Naive thymus-derived CD4-positive, alpha-beta T cell (primary cell): ENCODE measurements at regions of chr1 and their contacts with region 1.

Region 1: GRCh38 chr1:59699227-59699847 is 115.4 kb upstream of the HOOK1 start:
- DNase-seq: peak in 7 of 9 donors; percentile 21 to 63 (median 51)
- ATAC-seq: peak; percentile 75
- H3K4me3 ChIP-seq: no peak overlapping the region
- H3K4me3 Mint-ChIP-seq: peak overlapping the region in 1 of 10 donors; percentile 19
- H3K27ac ChIP-seq: no peak overlapping the region
- H3K27ac Mint-ChIP-seq: peak overlapping the region in 2 of 9 donors; percentile 1 to 31
- H3K4me1 ChIP-seq: peaks cover 5 to 6% of the 10 kb centered on the region in 2 donors
- H3K4me1 Mint-ChIP-seq: peaks cover 6 to 30% (median 22%) of the 10 kb centered on the region in 7 donors
- H3K27me3 ChIP-seq: no peaks in the 10 kb centered on the region
- H3K27me3 Mint-ChIP-seq: no peaks in the 10 kb centered on the region

Region 2: GRCh38 chr1:58515794-58516401 is 1183.4 kb before region 1 on chr1:
- CTCF ChIA-PET with region 1: interaction called, 5 read pairs
- POLR2A ChIA-PET with region 1: no interaction called
- intact Hi-C with region 1: loop called (anchors 2 kb)
- DNase-seq: peak in 7 of 9 donors; percentile 30 to 63 (median 53)
- ATAC-seq: peak; percentile 80
- H3K4me3 ChIP-seq: no peak overlapping the region
- H3K4me3 Mint-ChIP-seq: no peak overlapping the region
- H3K27ac ChIP-seq: no peak overlapping the region
- H3K27ac Mint-ChIP-seq: peak overlapping the region; percentile 11 to 84 (median 78)
- H3K4me1 ChIP-seq: no peaks in the 10 kb centered on the region
- H3K4me1 Mint-ChIP-seq: peaks cover 0 to 28% (median 8%) of the 10 kb centered on the region in 7 donors
- H3K27me3 ChIP-seq: no peaks in the 10 kb centered on the region
- H3K27me3 Mint-ChIP-seq: no peaks in the 10 kb centered on the region

Region 3: GRCh38 chr1:58739856-58740466 is 959.4 kb before region 1 on chr1:
- CTCF ChIA-PET with region 1: interaction called, 72 read pairs
- POLR2A ChIA-PET with region 1: no interaction called
- intact Hi-C with region 1: loop called (anchors 1 kb)
- DNase-seq: peak in 7 of 9 donors; percentile 36 to 68 (median 62)
- ATAC-seq: peak; percentile 70
- H3K4me3 ChIP-seq: no peak overlapping the region
- H3K4me3 Mint-ChIP-seq: no peak overlapping the region
- H3K27ac ChIP-seq: no peak overlapping the region
- H3K27ac Mint-ChIP-seq: no peak overlapping the region
- H3K4me1 ChIP-seq: no peaks in the 10 kb centered on the region
- H3K4me1 Mint-ChIP-seq: peaks cover 0 to 14% (median 0%) of the 10 kb centered on the region in 7 donors
- H3K27me3 ChIP-seq: no peaks in the 10 kb centered on the region
- H3K27me3 Mint-ChIP-seq: peaks cover 0 to 5% (median 3%) of the 10 kb centered on the region in 5 donors

Region 4: GRCh38 chr1:58903514-58904298 is 795.6 kb before region 1 on chr1:
- CTCF ChIA-PET with region 1: no interaction called
- POLR2A ChIA-PET with region 1: no interaction called
- intact Hi-C with region 1: loop called in 1 of 2 experiments (anchors 5 kb)
- DNase-seq: peak; percentile 30 to 88 (median 49)
- ATAC-seq: peak; percentile 91
- H3K4me3 ChIP-seq: peak overlapping the region; percentile 60
- H3K4me3 Mint-ChIP-seq: peak overlapping the region; percentile 74 to 86 (median 80)
- H3K27ac ChIP-seq: peak overlapping the region; percentile 63
- H3K27ac Mint-ChIP-seq: peak overlapping the region in 8 of 9 donors; percentile 33 to 91 (median 74)
- H3K4me1 ChIP-seq: peaks cover 4% of the 10 kb centered on the region in 2 donors
- H3K4me1 Mint-ChIP-seq: peaks cover 5 to 38% (median 16%) of the 10 kb centered on the region in 7 donors
- H3K27me3 ChIP-seq: no peaks in the 10 kb centered on the region
- H3K27me3 Mint-ChIP-seq: no peaks in the 10 kb centered on the region

Region 5: GRCh38 chr1:59046730-59047157 is 652.6 kb before region 1 on chr1:
- CTCF ChIA-PET with region 1: no interaction called
- POLR2A ChIA-PET with region 1: no interaction called
- intact Hi-C with region 1: loop called (anchors 1 to 10 kb)
- DNase-seq: peak in 7 of 9 donors; percentile 18 to 49 (median 34)
- ATAC-seq: peak; percentile 84
- H3K4me3 ChIP-seq: no peak overlapping the region
- H3K4me3 Mint-ChIP-seq: peak overlapping the region in 8 of 10 donors; percentile 14 to 82 (median 34)
- H3K27ac ChIP-seq: no peak overlapping the region
- H3K27ac Mint-ChIP-seq: peak overlapping the region; percentile 64 to 96 (median 77)
- H3K4me1 ChIP-seq: peaks cover 30% of the 10 kb centered on the region in 2 donors
- H3K4me1 Mint-ChIP-seq: peaks cover 26 to 65% (median 41%) of the 10 kb centered on the region in 7 donors
- H3K27me3 ChIP-seq: no peaks in the 10 kb centered on the region
- H3K27me3 Mint-ChIP-seq: no peaks in the 10 kb centered on the region

Region 6: GRCh38 chr1:59296358-59297256 is 402.7 kb before region 1 on chr1 and contains the start of gene FGGY:
- CTCF ChIA-PET with region 1: interaction called, 3 read pairs
- POLR2A ChIA-PET with region 1: interaction called, 3 read pairs
- intact Hi-C with region 1: loop called (anchors 2 to 5 kb)
- DNase-seq: peak; percentile 71 to 85 (median 81)
- ATAC-seq: peak; percentile 93
- H3K4me3 ChIP-seq: peak within 1 kb of the TSS; percentile 73
- H3K4me3 Mint-ChIP-seq: peak within 1 kb of the TSS; percentile 77 to 95 (median 92)
- H3K27ac ChIP-seq: peak within 1 kb of the TSS; percentile 85
- H3K27ac Mint-ChIP-seq: peak within 1 kb of the TSS; percentile 83 to 96 (median 92)
- H3K4me1 ChIP-seq: peaks cover 7 to 11% of the 10 kb centered on the region in 2 donors
- H3K4me1 Mint-ChIP-seq: peaks cover 9 to 51% (median 27%) of the 10 kb centered on the region in 7 donors
- H3K27me3 ChIP-seq: no peaks in the 10 kb centered on the region
- H3K27me3 Mint-ChIP-seq: no peaks in the 10 kb centered on the region
- total RNA-seq, gene FGGY: 10.7 to 15.2 (median 13.9) TPM

Region 7: DNA sequence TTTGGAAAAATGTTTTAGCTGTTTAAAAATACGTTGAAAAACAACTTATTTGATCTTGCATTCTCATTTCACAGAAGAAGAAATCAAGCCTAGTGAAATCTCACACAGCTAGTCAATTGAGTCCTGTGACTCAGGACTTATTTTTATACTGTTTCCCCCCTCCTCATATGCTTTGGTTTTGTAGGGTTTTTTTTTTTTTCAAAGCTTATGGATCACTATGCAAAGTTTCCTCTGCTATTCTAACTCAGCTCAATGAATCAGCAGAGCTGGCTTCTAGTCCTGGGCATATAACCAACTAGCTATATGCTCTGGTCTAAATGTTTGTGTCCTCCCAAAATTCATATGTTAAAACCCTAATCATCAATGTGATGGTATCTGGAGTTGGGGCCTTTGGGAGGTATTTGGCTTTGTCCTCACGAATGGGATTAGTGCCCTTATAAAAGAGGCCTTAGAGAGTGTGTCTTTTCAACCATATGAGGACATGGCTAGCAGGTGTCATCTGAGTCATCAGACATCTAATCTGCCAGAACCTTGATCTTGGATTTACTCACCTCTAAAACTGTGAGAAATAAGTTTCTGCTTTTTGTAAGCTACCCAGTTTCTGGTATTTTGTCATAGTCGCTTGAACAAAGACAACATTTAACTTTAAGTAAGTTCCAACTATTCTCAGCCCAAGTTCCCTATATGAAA is 691.4 kb after region 1 on chr1:
- CTCF ChIA-PET with region 1: no interaction called
- POLR2A ChIA-PET with region 1: no interaction called
- intact Hi-C with region 1: no loop called
- DNase-seq: no peak
- ATAC-seq: no peak
- H3K4me3 ChIP-seq: no peak overlapping the region
- H3K4me3 Mint-ChIP-seq: no peak overlapping the region
- H3K27ac ChIP-seq: no peak overlapping the region
- H3K27ac Mint-ChIP-seq: no peak overlapping the region
- H3K4me1 ChIP-seq: no peaks in the 10 kb centered on the region
- H3K4me1 Mint-ChIP-seq: peaks cover 0 to 2% (median 0%) of the 10 kb centered on the region in 7 donors
- H3K27me3 ChIP-seq: no peaks in the 10 kb centered on the region
- H3K27me3 Mint-ChIP-seq: peaks cover 0 to 9% (median 3%) of the 10 kb centered on the region in 5 donors